Head of caudate nucleus (tissue), 42 donors: ENCODE measurements at regions of chr13 and their contacts with region 1.

Region 1: GRCh38 chr13:30313311-30313710 is 6.0 kb upstream of the KATNAL1 start:
- DNase-seq: peak in 5 of 42 donors; percentile 10 to 41 (median 22)

Region 2: GRCh38 chr13:30132623-30133553 is 180.4 kb before region 1 on chr13:
- intact Hi-C with region 1: loop called (anchors 10 kb)
- DNase-seq: peak; percentile 94 to 100 (median 98)